ENCODE measurements at regions of chr17 and their contacts with region 1.

Region 1: DNA sequence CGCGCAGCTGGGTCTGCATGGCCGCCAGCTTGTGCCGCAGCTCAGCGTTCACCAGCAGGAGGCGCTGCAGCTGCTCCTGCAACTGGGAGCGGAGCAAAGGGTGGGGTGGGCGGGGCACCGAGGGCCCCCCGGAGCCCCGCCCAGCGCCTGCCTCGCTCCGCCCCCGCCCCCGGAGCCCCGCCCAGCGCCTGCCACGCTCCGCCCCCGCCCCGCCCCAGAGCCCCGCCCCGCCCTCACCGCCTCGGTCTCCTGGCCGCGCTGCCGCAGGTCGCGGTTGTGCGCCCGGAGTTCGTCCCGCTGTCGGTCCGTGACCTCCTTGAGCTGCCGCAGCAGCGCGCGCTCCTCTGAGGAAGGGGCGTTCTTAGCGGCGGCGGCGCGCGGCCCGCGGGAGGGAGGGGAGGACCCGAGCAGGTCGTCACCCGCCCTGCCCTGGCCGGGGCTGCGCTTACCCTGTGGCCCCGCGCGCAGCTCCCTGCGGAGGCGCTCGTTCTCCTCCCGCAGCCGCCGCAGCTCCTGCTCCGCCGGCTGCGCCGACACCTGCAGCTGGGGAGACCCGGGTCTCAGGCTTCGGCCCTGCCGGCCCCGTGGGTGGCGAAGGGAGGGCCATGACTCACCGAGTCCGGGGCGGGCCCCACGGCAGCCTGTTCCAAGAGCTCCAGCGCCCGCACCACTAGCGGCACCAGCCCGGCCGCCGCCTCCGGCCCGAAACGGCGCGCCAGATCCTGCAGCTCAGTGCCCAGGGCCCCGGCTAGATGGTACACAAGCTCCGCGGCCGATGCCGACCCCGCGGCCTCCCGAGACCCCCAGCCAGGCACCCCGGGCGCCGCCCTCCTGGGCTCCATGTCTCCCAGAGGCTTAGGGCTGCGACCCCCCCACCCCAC is 463 bp downstream of the RILP start:
- DNase-seq: peak; percentile 93
- ATAC-seq: peak; percentile 69
- H3K4me3 Mint-ChIP-seq: peak overlapping the region; percentile 69
- H3K27ac Mint-ChIP-seq: no peak overlapping the region
- H3K4me1 Mint-ChIP-seq: peaks cover 41% of the 10 kb centered on the region
- H3K27me3 Mint-ChIP-seq: no peaks in the 10 kb centered on the region
- CTCF ChIP-seq: no peak

Region 2: GRCh38 chr17:1275962-1276736 is 373.1 kb before region 1 on chr17:
- CTCF ChIA-PET with region 1: no interaction called
- POLR2A ChIA-PET with region 1: no interaction called
- intact Hi-C with region 1: loop called (anchors 2 kb)
- DNase-seq: peak; percentile 65
- ATAC-seq: peak; percentile 87
- H3K4me3 Mint-ChIP-seq: peak overlapping the region; percentile 65
- H3K27ac Mint-ChIP-seq: no peak overlapping the region
- H3K4me1 Mint-ChIP-seq: peaks cover 12% of the 10 kb centered on the region
- H3K27me3 Mint-ChIP-seq: peaks cover 8% of the 10 kb centered on the region
- CTCF ChIP-seq: peak; percentile 16

Region 3: GRCh38 chr17:1490643-1491442 is 158.4 kb before region 1 on chr17:
- CTCF ChIA-PET with region 1: no interaction called
- POLR2A ChIA-PET with region 1: no interaction called
- intact Hi-C with region 1: no loop called
- DNase-seq: peak; percentile 68
- ATAC-seq: peak; percentile 47
- H3K4me3 Mint-ChIP-seq: peak overlapping the region; percentile 84
- H3K27ac Mint-ChIP-seq: peak overlapping the region; percentile 80
- H3K4me1 Mint-ChIP-seq: peaks cover 49% of the 10 kb centered on the region
- H3K27me3 Mint-ChIP-seq: no peaks in the 10 kb centered on the region
- CTCF ChIP-seq: no peak

Region 4: DNA sequence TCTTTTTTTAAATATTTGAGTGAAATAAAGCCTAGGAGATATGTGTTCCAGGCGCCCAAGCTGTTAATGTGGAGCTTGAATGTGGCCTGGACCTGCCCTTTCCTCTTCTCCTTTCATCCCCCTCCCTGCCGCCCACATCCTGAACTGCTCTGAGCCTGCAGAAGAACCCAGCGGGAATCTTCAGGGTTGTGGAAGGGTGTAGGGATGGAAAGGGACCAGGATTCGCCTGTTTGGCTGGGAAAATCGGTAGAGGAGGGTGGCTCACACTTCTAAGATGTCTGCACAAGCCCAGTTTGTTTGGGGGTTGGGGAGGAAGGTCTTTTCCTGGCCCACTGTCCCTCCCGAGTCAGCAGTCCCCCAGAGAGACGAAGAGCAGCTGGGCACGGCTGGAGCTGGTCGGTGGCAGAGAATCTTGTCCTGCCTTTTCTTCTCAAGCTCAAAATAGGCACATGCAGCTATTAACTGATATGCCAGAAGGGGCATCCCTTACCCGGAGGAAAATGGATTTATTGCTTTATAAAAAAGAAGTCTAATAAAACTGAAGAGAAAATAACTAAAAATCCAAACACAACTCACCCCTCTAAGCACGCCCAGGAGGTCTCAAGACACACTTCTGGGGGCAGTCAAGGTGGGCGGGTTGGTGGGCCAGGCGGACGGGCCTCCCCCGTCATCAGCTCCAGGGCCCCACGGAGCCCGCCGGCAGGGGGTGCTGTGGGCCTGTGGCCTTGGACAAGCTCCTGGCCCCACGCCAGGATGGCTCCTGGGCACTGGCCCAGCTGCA is 75.1 kb before region 1 on chr17:
- CTCF ChIA-PET with region 1: interaction called, 82 read pairs
- POLR2A ChIA-PET with region 1: interaction called, 30 read pairs
- intact Hi-C with region 1: loop called (anchors 1 kb)
- DNase-seq: peak; percentile 87
- ATAC-seq: peak; percentile 70
- H3K4me3 Mint-ChIP-seq: no peak overlapping the region
- H3K27ac Mint-ChIP-seq: no peak overlapping the region
- H3K4me1 Mint-ChIP-seq: peaks cover 25% of the 10 kb centered on the region
- H3K27me3 Mint-ChIP-seq: no peaks in the 10 kb centered on the region
- CTCF ChIP-seq: no peak

Region 5: DNA sequence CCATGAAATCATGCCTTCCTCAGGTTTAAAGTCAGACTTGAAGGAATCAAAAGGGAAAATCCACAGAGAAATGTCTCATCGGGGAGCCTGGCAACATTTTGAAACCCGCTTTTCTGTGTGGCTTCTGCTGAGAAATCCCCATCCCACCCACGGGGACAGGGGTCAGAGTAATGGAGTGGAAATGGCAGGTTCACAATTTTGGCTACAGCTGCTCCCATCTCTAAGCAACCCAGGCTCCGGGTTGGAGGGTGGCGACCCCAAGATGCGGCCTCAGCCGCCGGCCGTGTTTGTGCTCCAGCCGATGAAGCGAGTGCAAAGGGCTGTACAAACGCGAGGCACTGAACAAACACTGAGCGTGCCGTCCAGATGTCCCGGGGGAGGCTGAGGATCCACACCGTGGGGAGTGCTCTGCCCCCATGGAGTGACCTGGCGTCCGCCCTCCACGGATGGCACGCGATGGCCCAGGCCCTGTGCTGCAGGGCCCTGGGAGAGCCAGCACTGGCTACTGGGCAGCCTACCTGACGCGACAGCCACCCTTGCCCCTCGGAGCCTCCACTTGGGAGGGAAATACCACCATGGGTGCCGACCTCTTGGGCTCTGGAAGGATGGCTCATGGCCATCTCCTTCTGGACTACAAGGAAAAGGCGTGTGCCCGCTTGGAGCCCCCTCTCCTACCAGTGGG is 42.7 kb before region 1 on chr17:
- CTCF ChIA-PET with region 1: interaction called, 3 read pairs
- POLR2A ChIA-PET with region 1: interaction called, 15 read pairs
- intact Hi-C with region 1: no loop called
- DNase-seq: no peak
- ATAC-seq: no peak
- H3K4me3 Mint-ChIP-seq: peak overlapping the region; percentile 67
- H3K27ac Mint-ChIP-seq: peak overlapping the region; percentile 86
- H3K4me1 Mint-ChIP-seq: peaks cover 36% of the 10 kb centered on the region
- H3K27me3 Mint-ChIP-seq: no peaks in the 10 kb centered on the region
- CTCF ChIP-seq: no peak

Region 6: DNA sequence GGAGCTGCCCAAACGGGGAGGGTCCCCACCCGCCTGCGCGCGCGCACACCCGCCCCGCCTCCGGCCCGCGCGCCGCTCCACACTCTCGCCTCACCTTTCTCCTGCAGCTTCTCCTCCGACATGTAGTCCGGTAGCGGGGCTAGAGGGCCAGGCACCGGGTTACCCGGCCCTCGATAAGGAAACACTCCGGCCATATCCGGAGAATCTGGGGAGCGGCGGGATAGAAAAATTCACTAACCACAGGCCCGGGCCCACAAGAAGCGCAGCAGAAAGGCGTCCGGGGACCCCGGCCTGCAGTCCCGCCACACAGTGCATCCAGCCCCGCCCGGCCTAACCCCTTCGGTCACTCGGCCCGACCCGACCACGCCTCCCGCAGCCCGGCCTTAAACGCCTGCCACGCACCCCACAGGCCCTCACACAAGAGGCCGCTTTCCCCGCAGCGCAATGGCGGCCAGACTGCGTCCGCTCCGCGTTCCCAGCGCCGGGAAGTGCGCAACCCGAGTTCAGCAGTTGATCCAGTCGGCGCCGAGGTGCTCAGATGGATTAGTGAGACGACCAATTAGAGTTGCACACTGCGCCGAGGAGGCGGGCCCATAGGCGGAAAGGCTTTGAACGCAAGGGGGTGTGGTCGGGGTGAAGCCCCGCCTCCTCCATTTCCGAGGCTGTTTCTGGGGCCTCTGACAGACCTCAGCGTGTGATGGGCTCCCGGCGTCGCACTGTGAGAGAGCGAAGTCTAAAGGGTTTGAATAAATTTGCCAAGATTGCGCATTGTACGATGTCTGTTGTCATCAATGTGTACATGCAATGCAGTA is 35.4 kb after region 1 on chr17 and contains the start of gene PRPF8:
- CTCF ChIA-PET with region 1: no interaction called
- POLR2A ChIA-PET with region 1: interaction called, 6 read pairs
- intact Hi-C with region 1: loop called (anchors 2 kb)
- DNase-seq: peak; percentile 95
- ATAC-seq: peak; percentile 99
- H3K4me3 Mint-ChIP-seq: peak within 1 kb of the TSS; percentile 100
- H3K27ac Mint-ChIP-seq: peak within 1 kb of the TSS; percentile 96
- H3K4me1 Mint-ChIP-seq: peaks cover 33% of the 10 kb centered on the region
- H3K27me3 Mint-ChIP-seq: no peaks in the 10 kb centered on the region
- CTCF ChIP-seq: no peak
- total RNA-seq, gene PRPF8: 401 and 442 TPM in 2 replicates

Region 7: DNA sequence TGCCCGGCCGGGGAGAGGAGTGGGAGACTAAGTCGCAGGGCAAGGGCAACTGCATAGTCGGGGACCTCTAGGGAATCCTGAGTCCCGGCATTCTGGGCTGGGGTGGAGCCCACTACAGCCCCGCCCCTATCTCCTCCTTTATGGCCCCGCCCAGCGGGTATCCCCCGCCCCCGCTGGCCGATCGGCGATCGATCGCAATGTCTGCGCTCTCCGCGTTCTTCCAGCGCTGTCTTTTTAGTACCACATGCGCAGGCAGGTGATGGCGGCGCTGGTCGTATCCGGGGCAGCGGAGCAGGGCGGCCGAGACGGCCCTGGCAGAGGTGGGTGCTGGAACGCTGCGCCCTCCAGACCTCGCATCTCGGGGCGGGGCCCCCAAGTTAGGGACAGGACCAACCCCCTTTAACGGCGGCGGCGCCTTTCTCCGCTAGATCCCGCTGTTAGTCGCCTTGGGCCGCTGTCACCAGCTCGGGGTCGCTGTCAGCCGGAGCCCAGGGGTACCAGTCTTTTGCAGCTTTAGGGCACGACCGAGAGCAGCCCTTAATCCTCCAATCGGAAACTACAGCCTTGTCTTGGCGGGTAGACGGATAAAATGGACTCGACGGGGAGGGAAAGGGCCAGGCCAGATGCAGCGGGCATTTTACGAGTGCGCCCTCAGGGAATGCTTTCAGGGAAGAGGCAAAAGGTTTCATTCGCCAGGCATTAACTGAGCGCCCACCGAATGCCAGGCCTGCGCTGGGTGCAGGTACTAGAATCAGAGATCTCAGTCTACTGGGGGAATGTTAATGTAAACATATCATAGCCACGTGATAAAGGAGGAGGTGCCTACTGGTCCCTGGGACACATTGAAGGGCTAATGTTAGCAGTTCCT is 380.9 kb after region 1 on chr17 and contains the start of gene DPH1:
- CTCF ChIA-PET with region 1: no interaction called
- POLR2A ChIA-PET with region 1: no interaction called
- intact Hi-C with region 1: loop called (anchors 10 kb)
- DNase-seq: peak; percentile 80
- ATAC-seq: peak; percentile 78
- H3K4me3 Mint-ChIP-seq: peak within 1 kb of the TSS; percentile 96
- H3K27ac Mint-ChIP-seq: peak within 1 kb of the TSS; percentile 83
- H3K4me1 Mint-ChIP-seq: peaks cover 40% of the 10 kb centered on the region
- H3K27me3 Mint-ChIP-seq: peaks cover 25% of the 10 kb centered on the region
- CTCF ChIP-seq: no peak
- total RNA-seq, gene DPH1: 49.3 and 63.4 TPM in 2 replicates

Measured in activated B cell treated with CpG ODN at 0.5 μM for 24 hours (primary cell).